ENCODE measurements at regions of chr10 and their contacts with region 1.

Region 1: DNA sequence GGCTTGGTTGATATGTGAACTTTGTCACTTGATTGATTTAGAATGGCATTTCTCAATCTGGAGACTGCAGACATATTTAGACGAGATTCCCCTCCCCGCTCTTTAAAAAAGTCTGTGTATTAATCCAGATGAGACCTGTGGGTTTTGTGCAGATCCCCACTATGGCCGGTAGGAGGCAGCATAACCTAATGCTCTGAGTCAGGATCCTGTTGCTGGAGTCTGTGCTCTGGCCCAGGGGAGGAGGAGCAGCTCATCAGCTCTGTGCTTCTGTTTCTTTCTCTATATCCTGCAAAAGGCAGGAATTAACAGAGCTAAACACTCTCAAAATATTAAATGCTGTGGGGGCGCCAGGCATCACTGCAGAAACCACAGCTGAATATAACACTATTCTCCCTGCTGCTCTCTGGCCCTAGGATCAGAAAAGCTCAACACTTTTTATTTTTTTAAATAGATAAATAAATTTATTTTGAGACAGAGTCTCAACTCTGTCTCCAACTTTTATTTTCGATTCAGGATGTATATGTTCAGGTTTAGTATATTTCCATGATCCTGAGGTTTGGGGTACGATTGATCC is 23.9 kb upstream of the SEPHS1 start:
- DNase-seq: peak; percentile 93
- H3K4me3 ChIP-seq: no peak overlapping the region
- H3K27ac ChIP-seq: no peak overlapping the region
- H3K4me1 ChIP-seq: no peaks in the 10 kb centered on the region
- H3K27me3 ChIP-seq: peaks cover 0 to 5% (median 0%) of the 10 kb centered on the region in 4 donors
- CTCF ChIP-seq: peak; percentile 78 to 94 (median 90)
- EP300 ChIP-seq: no peak
- POLR2A ChIP-seq: no peak

Region 2: GRCh38 chr10:13439313-13440184 is 67.6 kb after region 1 on chr10:
- intact Hi-C with region 1: loop called (anchors 2 kb)
- DNase-seq: no peak
- H3K4me3 ChIP-seq: peak overlapping the region; percentile 40 to 57 (median 46)
- H3K27ac ChIP-seq: no peak overlapping the region
- H3K4me1 ChIP-seq: peaks cover 13 to 17% (median 16%) of the 10 kb centered on the region in 4 donors
- H3K27me3 ChIP-seq: peaks cover 0 to 39% (median 8%) of the 10 kb centered on the region in 4 donors
- CTCF ChIP-seq: no peak
- EP300 ChIP-seq: no peak
- POLR2A ChIP-seq: no peak

Region 3: GRCh38 chr10:13536674-13537366 is 164.8 kb after region 1 on chr10:
- intact Hi-C with region 1: loop called (anchors 10 kb)
- DNase-seq: no peak
- H3K4me3 ChIP-seq: no peak overlapping the region
- H3K27ac ChIP-seq: no peak overlapping the region
- H3K4me1 ChIP-seq: peaks cover 0 to 3% (median 0%) of the 10 kb centered on the region in 4 donors
- H3K27me3 ChIP-seq: peaks cover 0 to 20% (median 0%) of the 10 kb centered on the region in 4 donors
- CTCF ChIP-seq: peak; percentile 32 to 50 (median 33)
- EP300 ChIP-seq: no peak
- POLR2A ChIP-seq: no peak

Region 4: GRCh38 chr10:13586676-13587355 is 214.8 kb after region 1 on chr10 and contains the start of gene PRPF18:
- intact Hi-C with region 1: loop called (anchors 5 kb)
- DNase-seq: peak; percentile 97
- H3K4me3 ChIP-seq: peak within 1 kb of the TSS; percentile 76 to 86 (median 78)
- H3K27ac ChIP-seq: peak within 1 kb of the TSS; percentile 60 to 77 (median 68)
- H3K4me1 ChIP-seq: peaks cover 16 to 25% (median 20%) of the 10 kb centered on the region in 4 donors
- H3K27me3 ChIP-seq: peaks cover 0 to 23% (median 0%) of the 10 kb centered on the region in 4 donors
- CTCF ChIP-seq: peak in 2 of 3 experiments; percentile 97 to 99
- EP300 ChIP-seq: no peak
- POLR2A ChIP-seq: no peak
- total RNA-seq, gene PRPF18: 16.2 to 27.8 (median 25.6) TPM